ENCODE measurements at regions of chr7 and their contacts with region 1.

Region 1: GRCh38 chr7:30888747-30889146 is 22.9 kb upstream of the AQP1 start:
- DNase-seq: peak in 1 of 2 donors; percentile 90
- H3K4me3 ChIP-seq: no peak overlapping the region
- H3K27ac ChIP-seq: peak overlapping the region; percentile 60 to 72
- H3K4me1 ChIP-seq: peaks cover 21 to 24% of the 10 kb centered on the region in 2 donors
- H3K27me3 ChIP-seq: no peaks in the 10 kb centered on the region
- CTCF ChIP-seq: no peak

Region 2: DNA sequence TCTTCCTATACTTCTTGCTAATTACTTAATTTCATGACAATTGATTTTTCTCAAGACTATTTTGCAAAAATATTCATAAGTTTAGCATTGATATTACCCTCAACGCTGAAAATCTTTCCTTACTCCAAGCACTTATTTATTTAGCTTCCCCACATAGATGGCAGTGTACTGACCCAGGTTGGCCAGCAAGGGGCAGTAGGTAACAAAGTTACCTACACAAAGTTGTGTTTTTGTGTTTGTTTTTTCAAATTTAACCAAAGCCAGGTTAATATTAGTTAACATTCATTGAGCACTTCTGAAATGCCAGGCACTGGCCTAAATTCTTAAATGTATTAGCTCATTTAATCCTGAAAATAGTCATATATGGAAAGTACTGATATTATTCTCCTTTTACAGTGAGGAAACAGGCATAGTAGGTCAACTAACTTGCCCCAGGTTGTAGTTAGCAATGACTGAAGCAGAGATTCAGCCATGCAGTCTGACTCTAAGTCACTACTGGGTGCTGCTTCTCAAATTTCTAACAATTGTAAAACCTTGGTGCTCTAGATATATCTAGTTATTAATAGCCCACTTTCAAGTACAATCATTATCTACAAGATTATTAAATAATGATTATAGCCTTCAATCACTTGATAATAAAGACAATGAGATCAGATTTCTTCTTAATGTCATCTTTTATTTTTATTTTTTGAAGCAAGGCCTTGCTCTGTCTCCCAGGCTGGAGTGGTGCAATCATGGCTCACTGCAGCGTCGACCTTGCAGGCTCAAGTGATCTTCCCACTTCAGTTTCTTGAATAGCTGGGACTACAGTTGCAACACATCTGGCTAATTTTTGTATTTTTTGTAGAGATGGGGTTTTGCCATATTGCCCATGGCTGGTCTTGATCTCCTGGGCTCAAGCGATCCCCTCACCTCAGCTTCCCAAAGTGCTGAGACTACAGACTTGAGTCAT is 378.3 kb before region 1 on chr7:
- intact Hi-C with region 1: no loop called
- DNase-seq: no peak
- H3K4me3 ChIP-seq: no peak overlapping the region
- H3K27ac ChIP-seq: no peak overlapping the region
- H3K4me1 ChIP-seq: no peaks in the 10 kb centered on the region
- H3K27me3 ChIP-seq: no peaks in the 10 kb centered on the region
- CTCF ChIP-seq: peak; percentile 32 to 74 (median 69)

Region 3: DNA sequence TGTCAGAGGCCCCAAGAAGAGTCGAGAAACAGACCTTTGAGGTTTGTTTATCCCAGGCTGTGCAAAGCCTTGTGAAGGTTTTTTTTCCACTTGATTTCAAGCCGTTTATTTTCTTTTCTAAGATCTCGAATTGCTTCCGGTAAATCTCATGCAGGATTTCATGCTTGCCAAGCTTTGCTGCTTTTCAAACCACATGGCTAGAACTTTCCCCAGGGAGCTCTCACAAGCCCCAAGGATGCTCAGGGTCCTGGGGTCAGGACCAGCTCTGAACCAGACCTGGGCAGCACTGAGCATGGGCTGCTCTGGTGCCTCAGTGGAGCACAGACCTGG is 25.1 kb before region 1 on chr7:
- intact Hi-C with region 1: loop called (anchors 2 kb)
- DNase-seq: no peak
- H3K4me3 ChIP-seq: no peak overlapping the region
- H3K27ac ChIP-seq: peak overlapping the region; percentile 65 to 66
- H3K4me1 ChIP-seq: peaks cover 11 to 24% of the 10 kb centered on the region in 2 donors
- H3K27me3 ChIP-seq: no peaks in the 10 kb centered on the region
- CTCF ChIP-seq: no peak

Measured in ascending aorta (tissue), 2 donors.